Activated CD4-positive, alpha-beta T cell treated with anti-CD3 and anti-CD28 coated beads for 36 hours (primary cell): ENCODE measurements at regions of chr16 and their contacts with region 1.

Region 1: GRCh38 chr16:69386596-69386995 is 789 bp upstream of the TERF2 start:
- DNase-seq: no peak
- ATAC-seq: no peak
- H3K4me3 Mint-ChIP-seq: peak overlapping the region; percentile 100
- H3K27ac Mint-ChIP-seq: peak overlapping the region; percentile 55
- H3K4me1 Mint-ChIP-seq: peaks cover 29% of the 10 kb centered on the region
- H3K27me3 Mint-ChIP-seq: no peaks in the 10 kb centered on the region

Region 2: DNA sequence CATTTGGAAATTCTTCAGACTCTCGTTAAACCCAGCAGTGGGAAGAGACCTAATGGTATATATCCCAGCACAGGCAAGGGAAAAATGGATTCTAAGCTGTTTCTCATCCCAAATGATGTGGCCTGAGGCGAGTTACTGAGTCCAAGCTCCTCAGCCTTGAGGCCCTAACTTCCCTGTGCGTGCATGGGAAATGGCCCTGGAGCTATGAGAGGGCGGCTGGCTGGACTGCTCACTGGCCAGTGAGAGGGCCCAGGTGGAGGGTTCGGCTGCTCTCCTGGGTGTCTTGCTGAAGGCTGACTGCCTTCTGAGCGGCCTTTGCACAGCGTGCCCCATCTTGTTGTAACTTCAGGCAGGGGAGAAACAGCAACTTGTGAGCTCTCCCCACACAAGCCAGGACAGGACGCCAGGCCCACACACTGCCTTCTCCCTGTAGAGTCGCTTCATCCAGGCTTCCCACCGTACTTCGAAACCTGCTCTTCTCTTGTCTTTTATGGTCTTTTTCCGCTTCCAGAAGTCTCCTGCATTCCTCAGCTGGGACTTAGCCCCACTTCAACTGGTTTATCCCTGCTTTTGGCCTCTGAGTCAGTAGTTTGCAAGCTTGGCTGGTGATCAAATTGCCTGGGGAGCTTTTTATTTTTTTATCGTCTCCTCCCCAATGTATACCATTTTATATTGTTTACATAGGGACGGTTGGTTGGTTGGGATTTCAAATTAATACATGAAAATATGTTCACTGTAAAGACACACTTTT is 728.2 kb before region 1 on chr16:
- CTCF ChIA-PET with region 1: no interaction called
- POLR2A ChIA-PET with region 1: no interaction called
- intact Hi-C with region 1: no loop called
- DNase-seq: no peak
- ATAC-seq: no peak
- H3K4me3 Mint-ChIP-seq: no peak overlapping the region
- H3K27ac Mint-ChIP-seq: no peak overlapping the region
- H3K4me1 Mint-ChIP-seq: peaks cover 9% of the 10 kb centered on the region
- H3K27me3 Mint-ChIP-seq: peaks cover 23% of the 10 kb centered on the region

Region 3: DNA sequence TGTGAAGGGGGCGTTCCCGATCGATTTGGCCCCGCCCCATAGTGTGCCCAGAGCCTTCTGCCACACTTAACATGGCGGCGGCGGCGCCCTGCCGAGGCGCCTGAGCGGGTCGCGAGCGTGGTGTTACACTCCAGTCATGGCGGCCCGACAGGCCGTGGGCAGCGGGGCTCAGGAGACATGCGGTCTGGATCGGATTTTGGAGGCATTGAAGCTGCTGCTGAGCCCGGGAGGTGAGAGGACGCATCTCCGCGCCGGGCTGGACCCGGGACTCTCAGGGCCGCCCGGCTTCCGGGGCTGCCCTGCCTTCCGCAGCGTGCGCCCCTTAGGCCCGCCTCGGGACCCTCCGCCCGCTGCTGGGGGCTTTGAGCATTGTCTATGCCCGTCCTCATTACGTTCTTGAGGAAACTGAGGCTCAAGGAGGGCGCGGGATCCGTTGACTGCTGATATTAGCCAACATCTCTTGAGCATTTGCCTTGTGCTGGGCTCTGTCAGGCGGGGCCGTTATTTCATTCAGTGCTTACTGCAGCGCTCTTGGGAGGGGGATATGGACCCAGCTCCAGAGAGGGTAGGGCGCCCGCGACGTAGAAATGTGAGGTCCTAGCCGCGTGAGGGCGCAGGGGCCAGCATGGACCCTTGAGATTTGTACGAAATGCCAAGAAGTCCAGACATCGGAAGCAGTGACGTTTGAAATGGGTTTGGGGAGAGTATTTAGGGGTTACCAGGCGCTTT is 543.0 kb before region 1 on chr16 and contains the start of gene TANGO6:
- CTCF ChIA-PET with region 1: no interaction called
- POLR2A ChIA-PET with region 1: no interaction called
- intact Hi-C with region 1: loop called in 1 of 2 experiments (anchors 1 kb)
- DNase-seq: peak; percentile 95
- ATAC-seq: peak; percentile 93
- H3K4me3 Mint-ChIP-seq: peak within 1 kb of the TSS; percentile 84
- H3K27ac Mint-ChIP-seq: peak within 1 kb of the TSS; percentile 91
- H3K4me1 Mint-ChIP-seq: peaks cover 27% of the 10 kb centered on the region
- H3K27me3 Mint-ChIP-seq: no peaks in the 10 kb centered on the region
- total RNA-seq, gene TANGO6: 29.7 to 31.2 TPM

Region 4: DNA sequence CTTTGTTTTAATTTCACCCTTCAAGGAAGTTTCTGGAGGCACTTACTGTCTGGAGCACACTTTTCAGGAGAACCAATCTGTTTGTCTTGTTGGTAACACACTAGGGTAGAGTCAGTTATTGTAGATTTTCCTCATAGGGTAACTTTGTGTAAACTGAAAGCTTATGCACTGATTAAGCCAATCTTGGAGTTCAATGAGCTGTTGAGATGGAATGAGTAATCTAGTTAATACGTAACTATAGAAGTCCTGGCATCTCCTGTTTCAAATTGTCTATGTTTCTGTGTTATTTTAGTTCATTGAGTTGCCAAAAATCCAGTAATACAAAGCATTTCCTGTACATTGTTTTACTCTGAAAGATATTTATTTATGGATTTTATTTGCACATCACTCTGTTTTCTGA is 392.7 kb before region 1 on chr16:
- CTCF ChIA-PET with region 1: no interaction called
- POLR2A ChIA-PET with region 1: no interaction called
- intact Hi-C with region 1: no loop called
- DNase-seq: no peak
- ATAC-seq: no peak
- H3K4me3 Mint-ChIP-seq: no peak overlapping the region
- H3K27ac Mint-ChIP-seq: no peak overlapping the region
- H3K4me1 Mint-ChIP-seq: no peaks in the 10 kb centered on the region
- H3K27me3 Mint-ChIP-seq: no peaks in the 10 kb centered on the region

Region 5: GRCh38 chr16:69276148-69277115 is 110.2 kb before region 1 on chr16:
- CTCF ChIA-PET with region 1: no interaction called
- POLR2A ChIA-PET with region 1: no interaction called
- intact Hi-C with region 1: no loop called
- DNase-seq: no peak
- ATAC-seq: no peak
- H3K4me3 Mint-ChIP-seq: no peak overlapping the region
- H3K27ac Mint-ChIP-seq: no peak overlapping the region
- H3K4me1 Mint-ChIP-seq: no peaks in the 10 kb centered on the region
- H3K27me3 Mint-ChIP-seq: no peaks in the 10 kb centered on the region

Region 6: GRCh38 chr16:69330286-69331109 is 56.1 kb before region 1 on chr16 and contains the start of gene PDF:
- CTCF ChIA-PET with region 1: no interaction called
- POLR2A ChIA-PET with region 1: no interaction called
- intact Hi-C with region 1: loop called in 1 of 2 experiments (anchors 1 kb)
- DNase-seq: peak; percentile 90
- ATAC-seq: peak; percentile 94
- H3K4me3 Mint-ChIP-seq: peak within 1 kb of the TSS; percentile 83
- H3K27ac Mint-ChIP-seq: peak within 1 kb of the TSS; percentile 84
- H3K4me1 Mint-ChIP-seq: peaks cover 45% of the 10 kb centered on the region
- H3K27me3 Mint-ChIP-seq: no peaks in the 10 kb centered on the region
- total RNA-seq, gene PDF: 10.1 to 19.9 TPM

Region 7: DNA sequence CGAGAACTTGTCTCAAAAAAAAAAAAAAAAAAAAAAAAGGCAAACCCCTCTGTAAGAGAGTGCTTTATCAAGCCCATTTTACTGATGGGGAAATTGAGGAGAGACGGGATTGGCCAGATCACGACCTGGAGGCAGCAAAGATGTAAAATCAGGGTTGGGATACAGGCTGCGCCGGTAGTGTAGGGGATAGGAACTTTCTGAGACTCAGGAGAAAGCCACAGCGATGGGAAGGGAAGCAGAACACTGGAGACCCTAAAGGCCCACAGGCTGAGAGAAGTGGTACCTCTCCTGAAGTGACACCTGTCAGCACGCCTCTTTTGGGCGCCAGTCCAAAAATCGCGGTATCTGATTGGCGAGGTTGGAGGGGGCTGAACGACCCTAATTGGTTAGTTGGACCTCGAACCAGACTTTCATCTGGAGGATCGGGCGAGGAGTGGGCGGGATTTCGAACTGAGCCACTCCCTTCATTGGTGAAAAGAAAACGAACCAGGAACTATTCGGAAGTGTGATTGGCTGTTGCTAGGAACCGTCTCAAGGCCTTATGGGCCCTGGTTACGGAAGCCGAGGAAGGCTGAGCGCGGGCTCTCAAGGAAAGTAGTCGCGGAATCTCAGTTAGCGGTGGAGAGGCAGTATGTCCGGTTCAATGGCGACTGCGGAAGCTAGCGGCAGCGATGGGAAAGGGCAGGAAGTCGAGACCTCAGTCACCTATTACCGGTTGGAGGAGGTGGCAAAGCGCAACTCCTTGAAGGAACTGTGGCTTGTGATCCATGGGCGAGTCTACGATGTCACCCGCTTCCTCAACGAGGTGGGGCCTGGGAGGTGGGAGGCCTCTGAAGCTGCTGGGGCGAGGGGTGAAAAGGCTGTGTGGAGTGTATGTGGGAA is 37.7 kb after region 1 on chr16 and contains the start of gene CYB5B:
- CTCF ChIA-PET with region 1: no interaction called
- POLR2A ChIA-PET with region 1: interaction called, 5 read pairs
- intact Hi-C with region 1: loop called (anchors 1 kb)
- DNase-seq: peak; percentile 98
- ATAC-seq: peak; percentile 97
- H3K4me3 Mint-ChIP-seq: peak within 1 kb of the TSS; percentile 96
- H3K27ac Mint-ChIP-seq: peak within 1 kb of the TSS; percentile 93
- H3K4me1 Mint-ChIP-seq: peaks cover 35% of the 10 kb centered on the region
- H3K27me3 Mint-ChIP-seq: no peaks in the 10 kb centered on the region
- total RNA-seq, gene CYB5B: 158 to 187 TPM

Region 8: DNA sequence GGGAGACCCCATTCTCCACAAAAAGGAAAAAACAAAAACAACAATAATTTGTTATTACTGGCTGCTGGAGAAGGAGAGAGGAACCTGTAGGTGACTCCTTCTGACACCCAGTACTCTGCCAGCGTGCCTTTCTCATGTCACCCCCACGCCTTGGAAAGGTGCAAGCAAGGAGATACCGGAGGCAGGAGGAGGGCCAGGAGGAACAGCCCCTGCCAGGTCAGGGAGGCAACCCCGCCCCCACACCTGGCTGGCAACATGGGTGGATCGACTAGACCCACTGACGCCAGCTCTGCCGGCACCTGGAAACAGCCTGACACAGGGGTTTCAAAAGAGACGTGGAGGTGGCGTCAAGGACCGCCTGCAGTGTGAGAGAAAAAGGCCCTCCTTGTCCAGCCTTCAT is 100.1 kb after region 1 on chr16:
- CTCF ChIA-PET with region 1: no interaction called
- POLR2A ChIA-PET with region 1: no interaction called
- intact Hi-C with region 1: no loop called
- DNase-seq: no peak
- ATAC-seq: no peak
- H3K4me3 Mint-ChIP-seq: no peak overlapping the region
- H3K27ac Mint-ChIP-seq: no peak overlapping the region
- H3K4me1 Mint-ChIP-seq: no peaks in the 10 kb centered on the region
- H3K27me3 Mint-ChIP-seq: peaks cover 3% of the 10 kb centered on the region

Region 9: DNA sequence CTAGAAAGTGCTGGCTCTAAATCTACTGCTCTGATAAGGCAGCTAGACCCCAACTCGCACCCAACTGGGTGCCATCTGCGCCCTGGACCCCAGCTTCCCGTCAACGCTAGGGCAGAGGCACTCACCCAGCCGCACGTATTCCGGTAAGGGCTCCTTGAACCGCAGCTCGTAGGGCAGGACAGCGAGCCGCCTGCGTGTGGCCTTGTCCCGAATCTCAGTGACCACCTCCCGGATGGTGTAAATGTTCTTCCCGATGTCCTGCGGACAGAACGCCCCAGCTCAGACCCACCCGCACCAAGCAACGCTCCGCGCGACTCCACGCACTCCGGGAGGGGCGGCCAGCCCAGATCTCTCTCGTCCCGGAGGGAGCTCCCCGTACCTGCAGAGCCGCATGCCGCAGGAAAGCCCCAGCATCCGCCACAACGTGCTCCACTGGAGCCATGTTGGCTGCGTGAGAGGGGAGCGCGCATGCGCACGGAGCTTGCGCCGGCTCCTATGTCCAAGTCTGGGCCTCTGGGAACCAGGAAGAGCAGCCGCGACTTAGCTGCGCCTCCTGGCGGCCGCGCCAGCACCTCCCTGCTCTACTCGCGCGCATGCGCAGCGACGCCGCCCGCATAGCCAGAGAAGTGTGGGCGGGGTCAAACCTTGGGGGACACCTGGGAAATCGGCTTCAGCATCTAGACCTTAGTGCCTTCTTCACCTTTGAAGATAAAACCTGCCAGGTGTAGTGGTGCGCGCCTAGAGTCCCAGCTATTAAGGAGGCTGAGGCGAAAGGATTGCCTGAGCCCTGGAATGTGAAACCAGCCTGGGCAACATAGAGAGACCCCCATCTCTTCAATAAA is 368.1 kb after region 1 on chr16 and contains the start of gene NOB1:
- CTCF ChIA-PET with region 1: interaction called, 7 read pairs
- POLR2A ChIA-PET with region 1: no interaction called
- intact Hi-C with region 1: loop called in 1 of 2 experiments (anchors 1 kb)
- DNase-seq: peak; percentile 99
- ATAC-seq: peak; percentile 98
- H3K4me3 Mint-ChIP-seq: peak within 1 kb of the TSS; percentile 96
- H3K27ac Mint-ChIP-seq: peak within 1 kb of the TSS; percentile 98
- H3K4me1 Mint-ChIP-seq: peaks cover 21% of the 10 kb centered on the region
- H3K27me3 Mint-ChIP-seq: no peaks in the 10 kb centered on the region
- total RNA-seq, gene NOB1: 109 to 112 TPM